CD8-positive, alpha-beta T cell (primary cell): ENCODE measurements at regions of chr6 and their contacts with region 1.

Region 1: GRCh38 chr6:31087494-31088089 is 24.8 kb downstream of the C6orf15 start:
- DNase-seq: peak; percentile 80 to 93 (median 88)
- ATAC-seq: peak; percentile 98
- H3K4me3 ChIP-seq: no peak overlapping the region
- H3K4me3 Mint-ChIP-seq: no peak overlapping the region
- H3K27ac ChIP-seq: no peak overlapping the region
- H3K27ac Mint-ChIP-seq: no peak overlapping the region
- H3K4me1 ChIP-seq: no peaks in the 10 kb centered on the region
- H3K4me1 Mint-ChIP-seq: peaks cover 8% of the 10 kb centered on the region
- H3K27me3 ChIP-seq: no peaks in the 10 kb centered on the region
- H3K27me3 Mint-ChIP-seq: no peaks in the 10 kb centered on the region
- CTCF ChIP-seq: peak; percentile 63

Region 2: GRCh38 chr6:30411515-30412207 is 675.9 kb before region 1 on chr6:
- CTCF ChIA-PET with region 1: interaction called, 3 read pairs
- POLR2A ChIA-PET with region 1: no interaction called
- intact Hi-C with region 1: loop called in 1 of 2 experiments (anchors 2 kb)
- DNase-seq: peak; percentile 29 to 77 (median 64)
- ATAC-seq: peak; percentile 63
- H3K4me3 ChIP-seq: no peak overlapping the region
- H3K4me3 Mint-ChIP-seq: peak overlapping the region; percentile 52
- H3K27ac ChIP-seq: no peak overlapping the region
- H3K27ac Mint-ChIP-seq: no peak overlapping the region
- H3K4me1 ChIP-seq: peaks cover 3% of the 10 kb centered on the region
- H3K4me1 Mint-ChIP-seq: peaks cover 7% of the 10 kb centered on the region
- H3K27me3 ChIP-seq: peaks cover 8% of the 10 kb centered on the region in 2 experiments
- H3K27me3 Mint-ChIP-seq: peaks cover 41% of the 10 kb centered on the region
- CTCF ChIP-seq: peak; percentile 83

Region 3: DNA sequence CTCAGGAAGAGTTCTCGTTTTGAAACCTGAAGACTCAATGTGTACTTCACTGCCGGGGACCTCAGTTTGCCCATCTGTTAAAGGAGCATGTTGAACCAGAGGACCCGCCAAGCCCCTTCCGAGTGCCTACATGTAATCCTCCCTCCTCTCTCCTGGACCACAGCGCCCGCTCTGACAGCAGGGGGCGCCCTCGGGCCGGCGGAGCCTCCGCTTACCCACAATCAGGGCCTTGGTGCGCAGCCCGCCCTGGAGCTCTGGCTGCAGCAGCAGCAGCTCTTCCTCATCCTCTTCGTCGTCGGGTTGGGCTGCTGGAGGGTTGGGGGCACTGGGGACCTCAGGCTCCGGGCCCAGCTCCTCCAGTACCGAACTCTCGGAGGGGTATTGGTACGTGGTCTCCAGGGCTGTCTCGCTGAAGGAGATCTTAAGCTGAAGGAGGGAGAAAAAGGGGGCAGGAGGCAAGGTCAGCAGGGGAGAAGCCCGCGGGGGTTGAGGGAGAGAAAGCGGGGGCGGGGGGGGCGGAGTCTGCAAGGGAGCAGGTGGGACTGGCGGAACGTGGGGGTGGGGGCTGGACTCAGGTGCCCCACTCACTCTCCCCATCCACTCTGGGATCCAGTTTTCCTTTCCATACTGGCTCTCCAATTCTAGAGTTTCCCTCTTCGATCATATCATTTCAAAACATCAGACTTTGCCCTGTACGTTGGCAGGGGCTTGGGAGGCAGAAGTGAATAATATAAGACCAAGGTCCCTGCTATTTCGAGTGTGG is 408.4 kb before region 1 on chr6:
- CTCF ChIA-PET with region 1: interaction called, 5 read pairs
- POLR2A ChIA-PET with region 1: no interaction called
- intact Hi-C with region 1: loop called in 1 of 2 experiments (anchors 5 kb)
- DNase-seq: peak; percentile 88 to 98 (median 92)
- ATAC-seq: peak; percentile 32
- H3K4me3 ChIP-seq: peak overlapping the region; percentile 86 to 95
- H3K4me3 Mint-ChIP-seq: peak overlapping the region; percentile 99
- H3K27ac ChIP-seq: peak overlapping the region; percentile 21 to 85
- H3K27ac Mint-ChIP-seq: peak overlapping the region; percentile 99
- H3K4me1 ChIP-seq: peaks cover 27% of the 10 kb centered on the region
- H3K4me1 Mint-ChIP-seq: peaks cover 38% of the 10 kb centered on the region
- H3K27me3 ChIP-seq: no peaks in the 10 kb centered on the region
- H3K27me3 Mint-ChIP-seq: no peaks in the 10 kb centered on the region
- CTCF ChIP-seq: peak; percentile 92

Region 4: GRCh38 chr6:30821862-30822782 is 265.5 kb before region 1 on chr6:
- CTCF ChIA-PET with region 1: interaction called, 49 read pairs
- POLR2A ChIA-PET with region 1: no interaction called
- intact Hi-C with region 1: loop called in 1 of 2 experiments (anchors 1 kb)
- DNase-seq: peak in 2 of 9 experiments; percentile 58 to 64
- ATAC-seq: peak; percentile 44
- H3K4me3 ChIP-seq: no peak overlapping the region
- H3K4me3 Mint-ChIP-seq: no peak overlapping the region
- H3K27ac ChIP-seq: peak overlapping the region in 1 of 2 experiments; percentile 3
- H3K27ac Mint-ChIP-seq: peak overlapping the region; percentile 81
- H3K4me1 ChIP-seq: peaks cover 10% of the 10 kb centered on the region
- H3K4me1 Mint-ChIP-seq: peaks cover 62% of the 10 kb centered on the region
- H3K27me3 ChIP-seq: no peaks in the 10 kb centered on the region
- H3K27me3 Mint-ChIP-seq: no peaks in the 10 kb centered on the region
- CTCF ChIP-seq: peak; percentile 61

Region 5: GRCh38 chr6:30914076-30914853 is 173.3 kb before region 1 on chr6 and contains the start of gene VARS2:
- CTCF ChIA-PET with region 1: interaction called, 27 read pairs
- POLR2A ChIA-PET with region 1: interaction called, 5 read pairs
- intact Hi-C with region 1: loop called (anchors 2 kb)
- DNase-seq: peak; percentile 66 to 92 (median 82)
- ATAC-seq: peak; percentile 96
- H3K4me3 ChIP-seq: peak within 1 kb of the TSS; percentile 61 to 92
- H3K4me3 Mint-ChIP-seq: peak within 1 kb of the TSS; percentile 93
- H3K27ac ChIP-seq: peak within 1 kb of the TSS; percentile 48 to 65
- H3K27ac Mint-ChIP-seq: peak within 1 kb of the TSS; percentile 88
- H3K4me1 ChIP-seq: peaks cover 15% of the 10 kb centered on the region
- H3K4me1 Mint-ChIP-seq: peaks cover 29% of the 10 kb centered on the region
- H3K27me3 ChIP-seq: no peaks in the 10 kb centered on the region
- H3K27me3 Mint-ChIP-seq: no peaks in the 10 kb centered on the region
- CTCF ChIP-seq: no peak
- total RNA-seq, gene VARS2: 19.5 to 20.6 TPM

Region 6: DNA sequence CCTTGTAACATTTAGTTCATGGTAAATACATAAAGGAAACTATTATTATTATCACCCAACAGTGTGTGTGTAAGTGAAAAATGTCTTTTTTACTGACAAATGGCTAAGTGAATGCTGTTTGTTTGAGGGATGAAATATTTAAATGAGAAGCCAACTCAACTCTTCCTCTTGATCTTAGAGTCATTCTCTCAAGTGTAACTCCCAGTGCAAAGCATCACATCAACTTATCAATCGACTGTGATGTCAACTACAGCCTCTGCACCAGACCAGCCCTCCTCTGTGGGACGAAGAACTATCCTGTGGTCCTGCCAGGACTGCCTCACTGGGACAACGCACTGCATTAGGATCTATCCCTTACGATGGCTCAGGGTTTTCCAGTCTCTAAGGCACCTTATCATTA is 19.5 kb after region 1 on chr6:
- CTCF ChIA-PET with region 1: interaction called, 31 read pairs
- POLR2A ChIA-PET with region 1: no interaction called
- intact Hi-C with region 1: no loop called
- DNase-seq: no peak
- ATAC-seq: no peak
- H3K4me3 ChIP-seq: no peak overlapping the region
- H3K4me3 Mint-ChIP-seq: no peak overlapping the region
- H3K27ac ChIP-seq: no peak overlapping the region
- H3K27ac Mint-ChIP-seq: no peak overlapping the region
- H3K4me1 ChIP-seq: no peaks in the 10 kb centered on the region
- H3K4me1 Mint-ChIP-seq: peaks cover 3% of the 10 kb centered on the region
- H3K27me3 ChIP-seq: no peaks in the 10 kb centered on the region
- H3K27me3 Mint-ChIP-seq: no peaks in the 10 kb centered on the region
- CTCF ChIP-seq: no peak